Activated CD4-positive, alpha-beta memory T cell treated with anti-CD3 and anti-CD28 coated beads, Interleukin-2, amount 10 ng/mL, durations not matched to agents 7 days and 5 days (primary cell): ENCODE measurements at regions of chr14 and their contacts with region 1.

Region 1: GRCh38 chr14:37230551-37231194 is 32.9 kb downstream of the MIPOL1 start:
- DNase-seq: no peak
- H3K4me3 Mint-ChIP-seq: no peak overlapping the region
- H3K27ac Mint-ChIP-seq: no peak overlapping the region
- H3K4me1 Mint-ChIP-seq: no peaks in the 10 kb centered on the region
- H3K27me3 Mint-ChIP-seq: no peaks in the 10 kb centered on the region

Region 2: DNA sequence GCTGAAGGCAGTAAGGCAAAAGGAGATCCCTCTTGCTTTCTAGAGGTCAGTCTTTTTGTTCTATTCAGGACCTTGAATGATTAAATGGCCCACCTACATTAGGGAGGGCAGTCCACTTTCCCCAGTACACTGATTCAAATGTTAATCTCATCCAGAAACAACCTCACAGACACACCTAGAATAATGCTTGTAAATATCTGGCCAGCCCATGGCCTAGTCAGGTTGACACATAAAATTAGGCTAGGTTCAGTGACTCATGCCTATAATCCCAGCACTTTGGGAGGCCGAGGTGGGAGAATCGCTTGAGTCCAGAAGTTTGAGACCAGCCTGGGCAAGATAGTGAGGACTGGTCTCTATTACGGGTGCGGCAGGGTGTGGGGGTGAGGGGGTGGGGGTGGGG is 10.5 kb after region 1 on chr14:
- CTCF ChIA-PET with region 1: interaction called, 11 read pairs
- POLR2A ChIA-PET with region 1: no interaction called
- DNase-seq: no peak
- H3K4me3 Mint-ChIP-seq: no peak overlapping the region
- H3K27ac Mint-ChIP-seq: no peak overlapping the region
- H3K4me1 Mint-ChIP-seq: no peaks in the 10 kb centered on the region
- H3K27me3 Mint-ChIP-seq: no peaks in the 10 kb centered on the region

Region 3: GRCh38 chr14:37376944-37377609 is 146.4 kb after region 1 on chr14:
- CTCF ChIA-PET with region 1: no interaction called
- POLR2A ChIA-PET with region 1: no interaction called
- DNase-seq: no peak
- H3K4me3 Mint-ChIP-seq: no peak overlapping the region
- H3K27ac Mint-ChIP-seq: no peak overlapping the region
- H3K4me1 Mint-ChIP-seq: no peaks in the 10 kb centered on the region
- H3K27me3 Mint-ChIP-seq: no peaks in the 10 kb centered on the region